ENCODE measurements at regions of chr18 and their contacts with region 1.

Region 1: DNA sequence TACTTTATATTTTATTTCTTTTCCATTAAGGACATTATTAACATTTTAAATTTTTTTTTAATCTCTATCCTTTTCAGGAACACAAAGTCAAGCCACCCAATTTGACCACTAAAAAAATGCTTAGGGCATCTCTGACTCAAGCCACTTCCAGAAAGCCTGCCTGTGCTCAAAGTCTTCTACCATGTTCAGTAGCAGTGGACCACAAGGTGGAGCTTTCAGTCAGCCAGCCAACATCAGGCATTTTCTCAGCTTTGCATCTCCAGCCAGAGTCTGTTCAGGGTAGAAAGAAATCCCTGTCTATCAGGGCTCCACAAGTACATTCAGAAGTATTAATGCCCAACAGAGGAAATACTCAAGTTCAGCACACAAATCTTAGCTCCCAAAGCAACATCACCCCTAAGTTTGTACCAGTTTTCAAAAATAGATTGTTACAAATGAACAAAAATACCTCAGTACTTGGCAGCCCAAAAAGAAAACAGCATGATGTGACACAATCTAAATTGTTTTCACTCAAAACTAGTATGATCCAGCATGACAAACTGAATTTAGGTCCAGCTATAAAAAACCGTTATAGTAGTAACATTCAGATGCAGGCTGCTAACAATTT is 37.6 kb downstream of the C18orf63 start:
- DNase-seq: peak in 1 of 2 donors; percentile 52
- H3K4me3 ChIP-seq: no peak overlapping the region
- CTCF ChIP-seq: no peak
- POLR2A ChIP-seq: no peak

Region 2: DNA sequence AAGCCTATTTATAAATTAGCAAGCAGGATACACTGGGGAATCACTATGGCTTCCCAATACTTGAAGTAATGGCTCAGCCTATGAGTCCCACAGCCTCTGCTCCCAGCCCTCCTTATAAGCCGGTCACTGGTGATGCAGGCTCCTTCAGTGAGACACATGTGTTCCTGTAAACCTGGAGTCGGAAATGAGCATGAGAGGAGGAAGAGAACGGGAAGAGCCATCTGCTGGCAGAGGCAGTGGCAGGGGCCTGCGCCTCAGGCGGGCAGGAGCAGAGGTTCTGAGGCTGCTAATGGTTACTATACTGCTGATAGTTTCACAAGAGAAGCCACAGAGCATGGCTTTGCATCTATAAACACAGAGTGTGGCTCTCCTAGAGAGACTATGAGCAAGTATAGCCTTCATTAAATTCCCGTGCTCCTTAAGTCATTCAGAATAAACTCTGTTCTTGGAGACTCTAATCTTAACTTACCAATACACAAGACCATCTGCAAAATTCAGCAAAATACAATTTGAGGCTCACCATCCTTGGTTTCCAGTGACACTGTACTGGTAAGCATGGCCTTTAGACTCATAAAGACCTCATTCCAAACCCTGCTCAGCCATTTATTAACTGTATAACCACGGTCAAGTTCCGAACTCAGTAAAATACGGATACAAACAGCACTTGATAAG is 269.0 kb before region 1 on chr18:
- intact Hi-C with region 1: no loop called
- DNase-seq: no peak
- H3K4me3 ChIP-seq: no peak overlapping the region
- CTCF ChIP-seq: no peak
- POLR2A ChIP-seq: no peak

Region 3: DNA sequence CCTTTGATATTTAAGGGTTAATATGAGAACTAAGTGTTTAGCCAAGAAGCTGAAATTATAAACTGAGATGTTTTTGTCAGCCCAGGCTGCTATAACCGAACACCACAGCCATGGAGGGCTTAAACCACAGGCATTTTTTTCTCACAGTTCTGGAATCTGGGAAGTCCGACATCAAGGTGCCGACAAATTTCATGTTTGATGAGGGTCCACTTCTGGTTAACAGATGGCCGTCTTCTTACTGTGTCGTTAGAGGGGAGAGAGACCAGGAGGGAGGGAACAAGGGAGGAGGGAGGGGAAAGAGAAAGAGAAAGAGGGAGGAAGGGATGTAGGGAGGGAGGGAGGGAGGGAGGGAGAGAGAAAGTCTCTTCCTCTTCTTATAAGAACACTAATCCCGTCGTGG is 136.4 kb after region 1 on chr18:
- intact Hi-C with region 1: loop called (anchors 5 kb)
- DNase-seq: no peak
- H3K4me3 ChIP-seq: no peak overlapping the region
- CTCF ChIP-seq: no peak
- POLR2A ChIP-seq: no peak

Region 4: DNA sequence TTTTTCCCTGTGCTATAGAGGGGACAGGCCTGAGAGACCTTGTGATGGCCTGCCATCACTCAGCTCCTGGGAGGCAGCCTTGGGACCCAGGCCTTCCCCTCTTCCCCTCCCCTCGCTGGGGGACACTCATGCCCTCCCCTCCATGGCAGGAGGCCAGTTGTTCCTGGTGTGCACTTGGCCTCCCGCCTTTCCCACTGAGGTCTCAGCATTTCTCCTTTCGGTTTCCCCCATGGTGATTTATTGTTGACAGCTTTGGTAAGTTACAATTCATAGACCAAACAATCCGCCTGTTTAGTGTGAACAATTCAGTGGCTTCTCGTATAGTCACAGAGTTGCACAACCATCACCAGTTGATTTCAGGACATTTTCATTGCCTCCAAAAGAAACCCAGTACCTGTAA is 170.8 kb after region 1 on chr18:
- intact Hi-C with region 1: no loop called
- DNase-seq: peak in 1 of 2 donors; percentile 52
- H3K4me3 ChIP-seq: no peak overlapping the region
- CTCF ChIP-seq: no peak
- POLR2A ChIP-seq: no peak

Region 5: DNA sequence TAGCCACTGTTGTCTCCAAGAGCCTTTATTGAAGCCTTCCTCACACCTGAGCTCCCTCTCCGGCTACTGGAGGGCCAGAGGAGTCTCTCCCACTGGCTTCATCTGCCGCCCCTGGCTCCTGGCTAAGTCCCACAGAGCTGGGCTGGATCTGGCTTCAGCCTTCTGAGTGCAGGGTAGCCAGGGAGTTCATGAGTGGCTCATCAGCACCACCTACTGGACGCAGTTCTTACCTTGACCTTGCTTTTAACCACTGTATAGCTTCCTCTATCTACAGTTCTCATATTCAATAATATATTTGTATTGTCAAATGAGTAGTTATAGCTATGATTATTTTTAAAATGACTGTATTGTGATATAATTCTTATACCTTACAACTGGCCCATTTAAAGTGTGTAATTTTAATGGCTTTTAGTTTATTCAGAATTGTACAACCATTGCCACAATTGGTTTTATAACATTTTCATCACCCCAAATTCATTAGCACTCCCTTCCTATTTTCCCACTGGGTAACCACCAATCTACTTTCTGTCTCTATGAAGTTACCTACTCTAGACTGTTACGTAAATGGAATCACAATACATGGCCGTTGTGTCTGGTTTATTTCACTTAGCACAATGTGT is 198.8 kb after region 1 on chr18:
- intact Hi-C with region 1: loop called (anchors 10 kb)
- DNase-seq: peak; percentile 81 to 93
- H3K4me3 ChIP-seq: no peak overlapping the region
- CTCF ChIP-seq: peak in 1 of 3 donors; percentile 54
- POLR2A ChIP-seq: no peak